MCF 10A (cell line): ENCODE measurements at regions of chr7 and their contacts with region 1.

Region 1: GRCh38 chr7:4631664-4632171 is 50.4 kb upstream of the FOXK1 start:
- DNase-seq: peak; percentile 95
- H3K4me3 Mint-ChIP-seq: peak overlapping the region; percentile 65
- H3K27ac Mint-ChIP-seq: peak overlapping the region; percentile 92
- H3K4me1 Mint-ChIP-seq: peaks cover 12% of the 10 kb centered on the region
- H3K27me3 Mint-ChIP-seq: no peaks in the 10 kb centered on the region
- CTCF ChIP-seq: peak; percentile 82

Region 2: GRCh38 chr7:3695602-3696001 is 936.1 kb before region 1 on chr7:
- CTCF ChIA-PET with region 1: interaction called, 4 read pairs
- POLR2A ChIA-PET with region 1: no interaction called
- intact Hi-C with region 1: loop called (anchors 1 kb)
- DNase-seq: peak; percentile 35
- H3K4me3 Mint-ChIP-seq: no peak overlapping the region
- H3K27ac Mint-ChIP-seq: no peak overlapping the region
- H3K4me1 Mint-ChIP-seq: no peaks in the 10 kb centered on the region
- H3K27me3 Mint-ChIP-seq: no peaks in the 10 kb centered on the region
- CTCF ChIP-seq: peak; percentile 22

Region 3: GRCh38 chr7:4479367-4480039 is 152.2 kb before region 1 on chr7:
- CTCF ChIA-PET with region 1: interaction called, 10 read pairs
- POLR2A ChIA-PET with region 1: no interaction called
- intact Hi-C with region 1: loop called (anchors 2 kb)
- DNase-seq: peak; percentile 72
- H3K4me3 Mint-ChIP-seq: no peak overlapping the region
- H3K27ac Mint-ChIP-seq: no peak overlapping the region
- H3K4me1 Mint-ChIP-seq: no peaks in the 10 kb centered on the region
- H3K27me3 Mint-ChIP-seq: peaks cover 16% of the 10 kb centered on the region
- CTCF ChIP-seq: peak; percentile 60

Region 4: DNA sequence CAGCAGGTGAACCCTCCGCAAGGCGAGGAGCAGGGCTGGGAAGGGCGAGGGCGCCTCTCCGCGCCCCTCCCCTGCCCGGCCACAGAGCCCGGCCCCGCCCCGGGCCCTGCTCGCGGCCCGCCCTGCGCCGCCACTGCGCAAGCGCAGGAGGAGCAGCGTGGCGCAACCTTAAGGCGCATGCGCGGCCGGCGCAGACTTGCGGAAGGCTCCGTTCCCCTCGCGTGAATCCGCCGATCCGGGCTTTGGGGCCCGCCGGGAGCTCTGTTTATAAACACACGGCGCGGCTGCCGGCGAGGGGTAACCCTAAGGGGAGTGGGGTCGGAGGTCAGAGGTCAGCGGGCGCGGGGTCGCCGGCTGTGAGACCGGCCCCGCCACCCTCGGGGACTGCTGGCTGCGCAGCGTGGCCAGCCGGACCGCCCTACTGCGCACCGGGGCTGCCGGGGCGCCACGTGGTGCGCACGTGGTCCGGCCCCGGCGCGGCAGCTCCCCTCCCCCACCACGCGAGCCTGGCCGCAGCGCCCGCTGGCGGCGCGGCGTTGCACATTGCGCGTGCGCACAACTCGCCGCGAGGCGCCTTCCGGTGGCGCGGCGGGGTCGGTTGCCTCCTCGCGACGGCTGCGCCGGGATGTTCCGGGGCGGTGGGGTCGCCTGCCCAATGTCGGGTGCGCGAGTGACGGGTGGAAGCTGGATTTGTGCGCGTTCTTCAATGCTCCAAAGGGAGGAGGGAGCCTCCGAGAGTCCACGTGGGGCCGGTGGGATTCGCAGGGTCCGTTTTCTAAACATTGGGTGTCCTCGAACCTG is 10.1 kb after region 1 on chr7:
- CTCF ChIA-PET with region 1: interaction called, 8 read pairs
- POLR2A ChIA-PET with region 1: interaction called, 10 read pairs
- intact Hi-C with region 1: no loop called
- DNase-seq: peak; percentile 90
- H3K4me3 Mint-ChIP-seq: peak overlapping the region; percentile 89
- H3K27ac Mint-ChIP-seq: peak overlapping the region; percentile 93
- H3K4me1 Mint-ChIP-seq: peaks cover 5% of the 10 kb centered on the region
- H3K27me3 Mint-ChIP-seq: no peaks in the 10 kb centered on the region
- CTCF ChIP-seq: peak; percentile 33

Region 5: GRCh38 chr7:4744391-4745264 is 112.9 kb after region 1 on chr7:
- CTCF ChIA-PET with region 1: interaction called, 5 read pairs
- POLR2A ChIA-PET with region 1: interaction called, 6 read pairs
- intact Hi-C with region 1: loop called (anchors 2 kb)
- DNase-seq: peak; percentile 99
- H3K4me3 Mint-ChIP-seq: peak overlapping the region; percentile 73
- H3K27ac Mint-ChIP-seq: peak overlapping the region; percentile 97
- H3K4me1 Mint-ChIP-seq: peaks cover 4% of the 10 kb centered on the region
- H3K27me3 Mint-ChIP-seq: no peaks in the 10 kb centered on the region
- CTCF ChIP-seq: no peak

Region 6: DNA sequence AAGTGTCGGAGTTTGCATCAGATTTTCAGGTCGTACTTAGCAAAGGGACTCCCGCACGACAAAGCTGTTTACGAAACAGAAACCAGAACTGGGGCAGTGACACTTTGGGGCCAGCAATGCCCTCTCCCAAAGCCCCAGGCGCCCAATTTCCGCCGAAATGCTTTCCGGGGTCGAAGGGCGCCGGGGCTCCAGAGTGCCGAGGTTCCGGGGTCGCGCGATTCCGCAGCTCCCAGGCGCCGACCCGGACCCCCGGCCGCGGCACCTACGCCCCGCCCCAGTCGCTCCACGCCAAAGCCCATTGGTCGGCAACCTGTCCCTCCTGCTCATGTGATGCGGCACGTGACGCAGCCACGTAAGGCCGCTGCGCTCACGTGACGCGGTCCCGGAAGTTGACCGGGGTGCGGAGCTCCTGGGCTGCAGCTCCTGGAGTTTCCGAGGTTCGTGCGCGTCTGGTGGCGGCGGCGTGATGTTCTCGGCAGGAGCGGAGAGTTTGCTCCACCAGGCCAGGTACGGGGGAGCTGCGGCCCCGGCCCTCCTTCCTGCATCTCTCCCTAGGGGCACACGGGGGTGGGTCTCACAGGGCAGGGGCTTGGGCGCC is 143.6 kb after region 1 on chr7 and contains the start of gene AP5Z1:
- CTCF ChIA-PET with region 1: interaction called, 3 read pairs
- POLR2A ChIA-PET with region 1: interaction called, 19 read pairs
- intact Hi-C with region 1: no loop called
- DNase-seq: peak; percentile 93
- H3K4me3 Mint-ChIP-seq: peak within 1 kb of the TSS; percentile 99
- H3K27ac Mint-ChIP-seq: peak within 1 kb of the TSS; percentile 98
- H3K4me1 Mint-ChIP-seq: peaks cover 15% of the 10 kb centered on the region
- H3K27me3 Mint-ChIP-seq: no peaks in the 10 kb centered on the region
- CTCF ChIP-seq: no peak
- total RNA-seq, gene AP5Z1: 26.5 and 35.0 TPM in 2 replicates